KBM-7 (cell line): ENCODE measurements at regions of chr7 and their contacts with region 1.

Region 1: DNA sequence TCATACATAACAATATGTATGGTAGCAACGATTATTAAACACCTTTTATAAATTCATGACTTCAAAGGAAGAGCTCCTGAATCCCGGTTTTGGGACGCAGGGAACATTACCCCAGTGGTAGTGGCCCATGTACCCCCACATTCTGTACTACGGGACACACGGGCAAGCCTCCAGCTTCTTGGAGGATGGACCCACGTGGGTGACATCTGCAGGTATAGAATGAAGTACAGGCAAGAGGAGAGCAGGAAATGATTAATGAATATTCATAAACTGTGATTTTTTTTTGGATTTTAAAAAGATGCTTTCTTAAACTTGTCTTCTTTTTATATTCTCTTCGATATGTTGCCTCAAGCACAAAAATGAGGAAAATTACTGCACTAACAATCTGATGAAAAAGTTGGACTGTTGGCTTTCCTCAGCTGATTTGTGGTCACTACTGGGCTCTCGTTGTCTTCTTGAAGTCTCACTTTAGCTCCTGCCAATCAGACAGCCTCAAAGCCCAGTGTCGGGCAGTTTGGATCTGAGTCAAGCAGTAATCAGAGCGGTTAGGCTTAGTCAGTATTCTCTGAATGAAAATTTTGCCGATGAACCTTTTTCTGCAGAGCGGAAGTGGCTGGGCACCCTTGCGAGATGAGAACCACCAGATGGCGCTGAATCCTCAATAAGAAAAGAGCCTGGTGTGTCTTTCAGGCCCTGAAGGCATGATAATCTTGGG is 157.7 kb upstream of the CDCA7L start:
- DNase-seq: peak; percentile 65

Region 2: DNA sequence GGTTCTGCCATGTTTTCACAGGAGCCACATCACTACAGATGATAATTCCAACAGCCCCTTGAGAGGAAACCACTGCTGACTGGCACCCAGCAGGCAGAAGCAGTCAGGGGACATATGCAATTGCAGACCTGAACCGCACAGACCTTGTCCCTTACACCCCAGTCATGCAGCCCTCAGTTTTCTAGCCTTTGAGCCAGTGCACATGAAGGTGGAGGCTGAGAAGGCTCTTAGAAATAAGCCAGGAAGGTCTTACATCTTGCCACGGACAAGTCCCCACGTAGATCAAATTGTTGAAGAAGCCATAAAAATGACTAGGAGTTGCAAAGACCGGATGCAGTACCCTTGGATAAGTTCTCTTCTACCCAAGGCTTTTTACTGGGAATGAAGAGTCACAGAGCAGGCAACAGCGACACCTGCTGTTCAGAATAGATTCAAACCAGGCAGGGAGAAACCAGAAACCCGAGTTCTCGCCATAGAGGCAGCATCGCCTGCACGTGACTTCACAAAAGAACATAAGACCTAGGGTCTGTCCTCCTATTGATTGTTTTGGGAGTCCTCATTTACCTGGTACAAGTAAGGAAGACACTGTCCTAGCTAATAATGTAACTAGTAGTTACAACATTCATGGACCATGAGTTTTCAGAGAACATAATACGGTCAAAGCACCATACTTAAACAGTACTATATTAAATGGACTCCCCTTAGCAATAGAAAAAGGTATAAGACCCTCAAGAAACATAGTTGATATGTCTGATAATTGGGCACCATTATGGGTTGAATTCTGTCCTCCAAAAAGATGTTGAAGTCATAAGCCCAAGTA is 385.4 kb after region 1 on chr7:
- in situ Hi-C with region 1: loop called (anchors 10 kb)
- DNase-seq: peak; percentile 73